ENCODE measurements at regions of chr3 and their contacts with region 1.

Region 1: GRCh38 chr3:10672422-10672821 is 143.6 kb upstream of the SLC6A11 start:
- DNase-seq: no peak
- ATAC-seq: no peak
- H3K4me3 ChIP-seq: no peak overlapping the region
- H3K27ac ChIP-seq: no peak overlapping the region
- H3K4me1 ChIP-seq: no peaks in the 10 kb centered on the region
- H3K27me3 ChIP-seq: no peaks in the 10 kb centered on the region

Region 2: DNA sequence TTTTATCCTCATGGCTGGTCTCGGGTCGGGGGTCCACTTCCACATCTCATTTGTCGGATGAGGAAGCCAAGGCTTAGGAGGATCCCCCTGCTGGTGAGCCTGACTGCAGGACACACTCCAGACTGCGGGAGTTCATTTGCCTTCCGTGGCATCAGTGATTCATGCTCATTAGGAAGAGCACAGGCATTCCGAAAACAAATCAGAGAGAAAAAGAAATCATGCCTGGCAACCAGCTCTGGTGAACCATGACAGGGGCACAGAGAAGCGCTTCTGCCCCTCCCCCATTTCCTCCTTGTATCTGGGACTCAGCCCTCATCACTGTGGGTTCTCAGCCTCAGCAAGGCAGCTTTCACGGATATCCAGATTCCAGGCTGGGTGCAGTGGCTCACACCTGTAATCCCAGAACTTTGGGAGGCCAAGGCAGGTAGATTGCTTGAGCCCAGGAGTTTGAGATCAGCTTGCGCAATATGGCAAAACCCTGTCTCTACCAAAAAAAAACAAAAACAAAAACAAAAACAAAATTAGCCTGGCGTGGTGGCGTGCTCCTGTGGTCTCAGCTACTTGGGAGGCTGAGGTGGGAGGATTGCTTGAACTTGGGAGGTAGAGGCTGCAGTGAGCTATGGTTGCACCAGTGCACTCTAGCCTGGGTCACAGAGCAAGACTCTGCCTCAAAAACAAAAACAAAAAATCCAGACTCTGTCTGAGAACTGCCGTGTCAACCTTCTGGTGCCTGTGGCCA is 479.3 kb before region 1 on chr3:
- intact Hi-C with region 1: no loop called
- DNase-seq: peak in 1 of 3 donors; percentile 19
- ATAC-seq: no peak
- H3K4me3 ChIP-seq: no peak overlapping the region
- H3K27ac ChIP-seq: peak overlapping the region; percentile 91
- H3K4me1 ChIP-seq: peaks cover 18% of the 10 kb centered on the region
- H3K27me3 ChIP-seq: no peaks in the 10 kb centered on the region

Region 3: GRCh38 chr3:10518506-10519150 is 153.8 kb before region 1 on chr3:
- intact Hi-C with region 1: no loop called
- DNase-seq: peak in 2 of 3 donors; percentile 27 to 62
- ATAC-seq: peak; percentile 56 to 78
- H3K4me3 ChIP-seq: no peak overlapping the region
- H3K27ac ChIP-seq: no peak overlapping the region
- H3K4me1 ChIP-seq: peaks cover 4% of the 10 kb centered on the region
- H3K27me3 ChIP-seq: no peaks in the 10 kb centered on the region

Region 4: DNA sequence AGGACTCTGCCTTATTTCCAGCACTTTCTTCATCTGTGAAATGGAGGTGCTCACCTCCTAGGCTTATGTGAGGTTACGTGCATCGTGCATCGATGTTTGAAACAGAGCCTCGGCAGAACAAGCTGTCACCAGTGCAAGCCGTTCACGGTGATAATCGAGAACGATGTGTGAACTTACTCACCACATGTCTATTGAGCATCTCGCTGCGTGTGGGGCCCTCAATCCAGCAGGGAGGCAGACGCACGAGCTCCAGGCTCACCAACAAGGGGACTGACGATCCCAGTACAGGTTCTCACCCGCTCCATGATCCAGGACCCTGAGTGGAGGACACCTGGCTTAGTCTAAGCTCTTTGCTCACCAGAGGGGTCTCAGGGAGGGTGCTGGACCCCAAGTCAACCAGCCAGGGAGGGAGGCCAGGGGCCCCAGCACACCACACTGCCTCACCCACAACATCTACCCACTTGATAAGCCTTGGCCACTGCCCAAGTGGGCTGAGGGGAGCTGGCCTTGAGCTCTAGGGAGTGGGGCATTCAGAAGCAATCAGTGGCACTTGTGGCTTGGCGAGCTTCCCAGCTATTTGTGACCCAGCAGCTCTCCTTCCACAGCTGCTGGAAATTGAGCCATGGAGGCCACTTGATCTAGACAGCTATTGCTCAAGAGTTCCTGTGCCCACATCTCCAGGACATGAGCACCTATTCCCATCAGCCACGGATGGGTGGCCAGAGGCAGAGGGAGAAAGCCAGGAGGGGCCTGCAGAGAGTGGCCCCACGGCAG is 285.7 kb after region 1 on chr3:
- intact Hi-C with region 1: loop called in 1 of 4 experiments (anchors 5 kb)
- DNase-seq: peak; percentile 67 to 91 (median 90)
- ATAC-seq: peak; percentile 61 to 64
- H3K4me3 ChIP-seq: no peak overlapping the region
- H3K27ac ChIP-seq: peak overlapping the region; percentile 74
- H3K4me1 ChIP-seq: peaks cover 4% of the 10 kb centered on the region
- H3K27me3 ChIP-seq: no peaks in the 10 kb centered on the region

Measured in right cardiac atrium (tissue), 5 donors.